Activated CD4-positive, alpha-beta T cell treated with anti-CD3 and anti-CD28 coated beads for 36 hours (primary cell): ENCODE measurements at regions of chrX and their contacts with region 1.

Region 1: DNA sequence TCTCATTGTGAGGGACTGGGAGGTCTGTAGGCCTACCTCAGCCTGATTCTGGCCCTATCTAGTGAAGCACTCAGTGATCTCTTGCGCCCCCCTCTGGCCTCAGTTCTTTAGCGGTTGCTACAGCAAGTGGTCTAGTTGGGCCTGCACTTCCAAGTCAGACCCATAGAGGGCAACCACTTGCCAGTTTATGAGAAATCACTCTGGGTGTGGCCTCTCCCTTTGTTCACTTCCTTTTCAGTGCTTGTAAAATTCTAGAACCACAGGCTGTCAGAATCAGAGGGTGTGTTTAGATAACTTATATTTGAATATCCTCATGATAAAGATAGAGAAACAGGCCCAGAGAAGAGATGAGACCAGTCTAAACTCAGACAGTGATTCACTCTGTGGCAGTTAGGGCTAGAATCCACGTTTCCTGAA is 60.9 kb upstream of the LAS1L start:
- DNase-seq: peak; percentile 96
- ATAC-seq: peak; percentile 81
- H3K4me3 Mint-ChIP-seq: peak overlapping the region; percentile 47
- H3K27ac Mint-ChIP-seq: peak overlapping the region; percentile 94
- H3K4me1 Mint-ChIP-seq: peaks cover 55% of the 10 kb centered on the region
- H3K27me3 Mint-ChIP-seq: no peaks in the 10 kb centered on the region

Region 2: DNA sequence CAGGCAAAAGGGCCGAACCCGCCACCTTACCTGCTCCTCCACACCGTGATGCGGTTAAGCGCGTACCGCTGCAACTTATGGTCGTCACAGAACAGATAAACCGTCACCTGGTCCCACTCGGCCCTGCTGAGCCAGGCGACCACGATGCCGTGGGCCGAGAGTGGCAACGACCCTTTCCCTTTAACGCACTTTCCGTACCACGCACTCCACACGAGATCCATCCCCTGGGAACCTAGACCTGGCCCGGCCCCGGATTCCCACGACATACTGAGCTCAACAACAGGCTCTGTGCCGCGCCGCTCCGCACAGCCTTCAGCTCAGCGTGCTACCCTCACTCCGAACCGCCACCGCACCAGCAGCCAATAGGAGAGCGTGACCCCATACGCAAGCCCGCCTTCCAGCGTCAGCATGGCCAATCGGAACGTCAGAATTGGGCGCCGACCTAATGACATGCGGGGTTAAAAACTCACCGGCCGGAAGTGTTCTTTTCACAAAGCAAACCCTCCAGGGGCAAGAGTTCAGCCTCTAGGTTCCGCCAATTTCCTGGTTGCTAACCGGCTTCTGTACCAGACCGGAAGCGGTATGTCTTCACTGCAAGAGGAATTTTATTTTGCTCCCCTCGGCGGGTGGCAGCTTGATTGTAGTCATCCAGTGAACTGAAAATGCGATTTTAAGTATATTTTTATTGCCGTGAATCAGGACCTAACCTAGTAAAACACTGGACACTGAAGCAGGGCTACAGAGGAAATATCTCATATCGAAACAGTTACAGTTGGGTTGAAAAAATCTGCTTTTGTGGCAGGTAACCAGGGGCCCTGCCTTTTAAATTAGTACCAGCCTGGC is 60.8 kb before region 1 on chrX and contains the start of gene LAS1L:
- CTCF ChIA-PET with region 1: no interaction called
- POLR2A ChIA-PET with region 1: no interaction called
- intact Hi-C with region 1: loop called in 1 of 2 experiments (anchors 2 kb)
- DNase-seq: peak; percentile 93
- ATAC-seq: peak; percentile 100
- H3K4me3 Mint-ChIP-seq: peak within 1 kb of the TSS; percentile 99
- H3K27ac Mint-ChIP-seq: peak within 1 kb of the TSS; percentile 96
- H3K4me1 Mint-ChIP-seq: peaks cover 19% of the 10 kb centered on the region
- H3K27me3 Mint-ChIP-seq: no peaks in the 10 kb centered on the region
- total RNA-seq, gene LAS1L: 56.4 to 64.0 TPM

Region 3: DNA sequence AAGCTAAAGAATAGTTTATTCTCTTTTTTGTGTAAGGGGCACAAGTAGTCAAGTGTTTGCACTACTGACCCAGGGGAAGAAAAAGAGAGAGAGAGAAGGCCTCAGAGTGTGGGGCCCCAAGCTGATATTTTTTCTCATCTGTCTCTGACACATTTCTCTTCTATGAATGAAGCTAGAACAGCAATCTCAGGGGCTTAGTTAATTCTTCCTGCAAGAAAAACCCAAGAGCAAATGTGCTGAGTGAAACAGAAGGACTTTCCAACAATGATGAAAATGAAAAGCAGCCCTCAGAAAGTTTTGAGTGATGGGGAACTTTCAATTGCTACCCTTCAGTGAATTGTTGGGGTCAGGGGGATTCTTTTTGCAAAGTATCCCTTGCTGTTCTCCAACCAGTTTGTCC is 62.8 kb after region 1 on chrX:
- CTCF ChIA-PET with region 1: interaction called, 13 read pairs
- POLR2A ChIA-PET with region 1: no interaction called
- intact Hi-C with region 1: no loop called
- DNase-seq: no peak
- ATAC-seq: peak; percentile 33
- H3K4me3 Mint-ChIP-seq: peak overlapping the region; percentile 62
- H3K27ac Mint-ChIP-seq: peak overlapping the region; percentile 98
- H3K4me1 Mint-ChIP-seq: peaks cover 34% of the 10 kb centered on the region
- H3K27me3 Mint-ChIP-seq: no peaks in the 10 kb centered on the region

Region 4: DNA sequence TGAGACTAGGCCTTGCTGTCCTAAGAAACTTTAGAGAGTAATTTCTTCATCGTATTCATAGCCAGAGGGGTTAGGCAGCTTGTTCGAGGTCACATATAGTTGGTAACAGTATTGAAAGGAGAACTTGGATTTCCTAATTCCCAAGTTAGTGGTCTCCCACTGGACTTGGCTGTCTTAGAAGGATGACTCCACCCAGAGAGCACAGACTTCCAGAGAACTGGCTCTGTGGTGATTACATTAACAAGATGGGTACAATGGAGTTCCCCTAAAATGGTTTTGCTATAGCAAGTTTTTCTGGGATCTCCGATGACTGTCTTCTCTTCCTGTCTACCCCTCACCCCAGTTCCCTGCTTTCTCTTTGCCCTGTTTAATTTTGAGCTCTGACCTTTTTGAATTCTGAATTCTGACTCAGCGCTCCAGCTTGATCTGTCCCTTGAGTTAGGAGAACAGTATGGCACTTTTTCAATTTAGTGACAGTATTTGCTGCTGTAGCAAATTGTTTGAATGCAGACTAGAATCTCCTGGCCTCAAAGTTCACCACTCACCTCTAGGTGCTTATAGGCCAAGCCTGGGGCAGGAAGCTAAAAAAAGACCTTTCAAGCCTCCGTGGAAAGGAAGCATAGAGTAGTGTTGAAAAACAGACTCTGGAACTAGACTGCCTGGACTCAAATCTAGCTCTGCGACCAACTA is 78.9 kb after region 1 on chrX:
- CTCF ChIA-PET with region 1: interaction called, 3 read pairs
- POLR2A ChIA-PET with region 1: interaction called, 9 read pairs
- intact Hi-C with region 1: loop called in 1 of 2 experiments (anchors 1 kb)
- DNase-seq: peak; percentile 10
- ATAC-seq: peak; percentile 52
- H3K4me3 Mint-ChIP-seq: peak overlapping the region; percentile 91
- H3K27ac Mint-ChIP-seq: peak overlapping the region; percentile 99
- H3K4me1 Mint-ChIP-seq: peaks cover 69% of the 10 kb centered on the region
- H3K27me3 Mint-ChIP-seq: no peaks in the 10 kb centered on the region

Region 5: DNA sequence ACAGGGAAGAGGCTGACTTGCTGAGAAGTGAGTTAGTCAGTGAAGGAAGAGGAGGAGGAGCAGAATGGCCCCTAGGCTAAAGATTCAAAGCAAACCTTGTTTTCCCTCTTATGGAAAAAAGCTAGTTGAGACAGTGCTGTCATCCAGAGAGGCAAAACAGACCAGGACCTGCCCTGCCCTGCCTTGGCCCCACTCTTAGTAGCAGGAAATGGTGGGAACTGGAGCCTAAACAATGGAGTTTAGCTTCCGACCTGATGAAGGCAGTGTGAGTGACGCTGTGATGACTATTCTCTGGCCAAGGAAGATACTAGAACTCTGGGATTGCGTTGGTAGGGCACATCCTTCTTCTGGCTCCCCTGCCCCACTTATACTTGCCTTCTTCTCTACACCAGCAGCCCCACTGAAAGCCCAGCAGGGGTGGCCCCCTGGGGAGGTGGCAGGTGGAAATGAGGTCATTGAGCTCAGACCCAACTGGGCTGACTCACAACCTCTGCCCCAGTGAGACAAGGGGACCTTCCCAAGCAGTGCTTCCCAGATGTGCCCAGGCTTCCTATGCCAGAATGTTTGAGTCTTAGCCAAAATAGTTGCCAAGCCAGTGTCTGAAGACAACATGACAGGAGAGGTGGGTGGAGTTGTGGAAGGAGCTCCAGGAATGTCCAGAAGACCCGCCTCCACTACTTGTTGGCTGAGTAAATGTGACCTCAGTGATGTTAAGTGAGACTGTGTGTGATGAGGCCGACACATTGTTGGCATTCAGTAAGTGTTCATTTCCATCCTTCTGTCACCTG is 110.8 kb after region 1 on chrX:
- CTCF ChIA-PET with region 1: interaction called, 4 read pairs
- POLR2A ChIA-PET with region 1: interaction called, 7 read pairs
- intact Hi-C with region 1: loop called in 1 of 2 experiments (anchors 1 kb)
- DNase-seq: peak; percentile 81
- ATAC-seq: peak; percentile 86
- H3K4me3 Mint-ChIP-seq: peak overlapping the region; percentile 44
- H3K27ac Mint-ChIP-seq: peak overlapping the region; percentile 91
- H3K4me1 Mint-ChIP-seq: peaks cover 68% of the 10 kb centered on the region
- H3K27me3 Mint-ChIP-seq: no peaks in the 10 kb centered on the region

Region 6: DNA sequence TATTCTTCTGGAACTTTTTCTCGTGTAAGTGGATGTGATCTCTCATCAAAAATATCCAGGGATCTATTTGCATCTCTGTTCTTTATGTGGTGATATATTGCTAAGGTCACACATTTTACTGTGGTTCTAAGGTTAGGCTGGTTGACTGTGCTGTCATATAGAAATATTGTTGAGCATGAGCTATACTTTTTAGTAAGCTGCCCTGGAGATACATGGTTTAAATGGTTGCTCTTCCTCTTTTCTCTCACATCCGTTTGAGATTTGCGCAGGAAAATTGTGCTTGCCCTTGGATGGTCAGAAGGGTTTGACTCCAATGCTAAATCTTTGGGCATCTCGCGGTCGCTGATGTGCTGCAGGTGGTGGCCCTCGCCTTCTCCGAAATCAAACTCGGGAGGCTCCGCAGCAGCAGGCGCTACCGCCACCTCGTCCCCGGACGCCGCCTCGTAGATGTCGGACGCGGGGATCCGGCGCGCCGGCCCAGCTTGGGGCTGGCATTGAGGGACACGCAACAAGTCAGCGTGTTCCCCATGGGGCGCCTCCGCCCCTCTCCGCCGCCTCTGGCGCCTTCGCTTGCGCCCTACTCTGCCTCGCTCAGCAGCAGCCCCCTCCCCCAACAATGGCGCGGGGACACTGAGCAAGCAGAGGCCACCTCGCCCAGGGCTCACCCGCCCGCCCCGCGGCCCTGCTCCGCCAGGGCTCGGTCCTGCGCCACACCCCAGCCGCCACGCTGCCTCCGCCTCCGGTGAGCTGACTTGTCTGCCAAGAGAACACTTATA is 226.4 kb after region 1 on chrX:
- CTCF ChIA-PET with region 1: no interaction called
- POLR2A ChIA-PET with region 1: no interaction called
- intact Hi-C with region 1: loop called in 1 of 2 experiments (anchors 10 kb)
- DNase-seq: peak; percentile 58
- ATAC-seq: peak; percentile 82
- H3K4me3 Mint-ChIP-seq: peak overlapping the region; percentile 52
- H3K27ac Mint-ChIP-seq: peak overlapping the region; percentile 78
- H3K4me1 Mint-ChIP-seq: peaks cover 9% of the 10 kb centered on the region
- H3K27me3 Mint-ChIP-seq: no peaks in the 10 kb centered on the region

Region 7: GRCh38 chrX:65985922-65986588 is 390.6 kb after region 1 on chrX:
- CTCF ChIA-PET with region 1: interaction called, 5 read pairs
- POLR2A ChIA-PET with region 1: interaction called, 3 read pairs
- intact Hi-C with region 1: loop called (anchors 1 kb)
- DNase-seq: peak; percentile 65
- ATAC-seq: peak; percentile 100
- H3K4me3 Mint-ChIP-seq: no peak overlapping the region
- H3K27ac Mint-ChIP-seq: peak overlapping the region; percentile 69
- H3K4me1 Mint-ChIP-seq: peaks cover 21% of the 10 kb centered on the region
- H3K27me3 Mint-ChIP-seq: no peaks in the 10 kb centered on the region